Calu3 (cell line): ENCODE measurements at regions of chr5 and their contacts with region 1.

Region 1: GRCh38 chr5:79020861-79021561 is 35.9 kb upstream of the ARSB start:
- DNase-seq: peak; percentile 73
- H3K4me3 Mint-ChIP-seq: peak overlapping the region; percentile 48
- H3K27ac Mint-ChIP-seq: no peak overlapping the region
- H3K4me1 Mint-ChIP-seq: peaks cover 23% of the 10 kb centered on the region
- H3K27me3 Mint-ChIP-seq: no peaks in the 10 kb centered on the region
- CTCF ChIP-seq: peak; percentile 86

Region 2: DNA sequence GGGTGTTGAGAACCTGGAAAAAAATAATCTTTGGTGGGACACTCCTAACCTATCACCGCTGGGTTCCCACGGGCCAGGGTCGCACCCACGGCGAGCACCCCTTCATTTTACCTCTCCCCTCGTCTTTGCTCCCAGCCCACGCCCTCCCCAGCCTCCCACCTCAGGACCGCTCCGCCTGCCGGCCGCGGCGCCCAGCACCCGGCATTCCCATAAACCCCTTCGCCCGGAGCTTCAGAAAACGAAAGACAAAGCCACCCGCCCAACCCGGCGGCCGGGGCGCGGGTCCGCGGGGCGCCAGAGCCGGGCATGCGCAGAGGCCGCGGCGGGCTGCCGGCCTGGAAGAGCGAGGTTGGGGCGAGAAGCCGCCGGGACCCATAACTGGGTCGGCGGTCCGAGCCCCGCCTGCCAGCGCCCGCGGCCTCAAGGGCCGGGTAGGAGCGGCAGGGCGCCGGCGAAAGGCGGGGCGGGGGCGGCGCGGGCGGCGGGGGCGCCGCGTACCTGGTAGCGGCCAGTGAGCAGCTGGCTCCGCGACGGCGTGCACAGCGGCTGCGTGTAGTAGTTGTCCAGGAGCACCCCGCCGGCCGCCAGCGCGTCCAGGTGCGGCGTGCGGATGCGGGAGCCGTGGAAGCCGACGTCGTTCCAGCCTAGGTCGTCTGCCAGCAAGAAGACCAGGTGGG is 36.4 kb before region 1 on chr5:
- CTCF ChIA-PET with region 1: interaction called, 8 read pairs
- intact Hi-C with region 1: loop called (anchors 5 kb)
- DNase-seq: peak; percentile 95
- H3K4me3 Mint-ChIP-seq: peak overlapping the region; percentile 99
- H3K27ac Mint-ChIP-seq: peak overlapping the region; percentile 27
- H3K4me1 Mint-ChIP-seq: peaks cover 55% of the 10 kb centered on the region
- H3K27me3 Mint-ChIP-seq: no peaks in the 10 kb centered on the region
- CTCF ChIP-seq: no peak

Region 3: GRCh38 chr5:79200573-79201183 is 179.7 kb after region 1 on chr5:
- CTCF ChIA-PET with region 1: no interaction called
- intact Hi-C with region 1: loop called (anchors 5 kb)
- DNase-seq: peak; percentile 28
- H3K4me3 Mint-ChIP-seq: no peak overlapping the region
- H3K27ac Mint-ChIP-seq: no peak overlapping the region
- H3K4me1 Mint-ChIP-seq: no peaks in the 10 kb centered on the region
- H3K27me3 Mint-ChIP-seq: no peaks in the 10 kb centered on the region
- CTCF ChIP-seq: peak; percentile 30

Region 4: GRCh38 chr5:79535477-79536192 is 514.6 kb after region 1 on chr5:
- CTCF ChIA-PET with region 1: no interaction called
- intact Hi-C with region 1: loop called (anchors 10 kb)
- DNase-seq: no peak
- H3K4me3 Mint-ChIP-seq: no peak overlapping the region
- H3K27ac Mint-ChIP-seq: no peak overlapping the region
- H3K4me1 Mint-ChIP-seq: no peaks in the 10 kb centered on the region
- H3K27me3 Mint-ChIP-seq: no peaks in the 10 kb centered on the region
- CTCF ChIP-seq: peak; percentile 14